ENCODE measurements at regions of chr14 and their contacts with region 1.

Region 1: GRCh38 chr14:20613094-20614037 is 22.2 kb upstream of the RNASE12 start:
- DNase-seq: peak; percentile 87 to 99
- ATAC-seq: peak; percentile 82 to 88
- H3K4me3 ChIP-seq: peak overlapping the region; percentile 50
- H3K27ac ChIP-seq: peak overlapping the region; percentile 78 to 81
- H3K4me1 ChIP-seq: peaks cover 39% of the 10 kb centered on the region
- CTCF ChIP-seq: peak; percentile 66
- EP300 ChIP-seq: no peak
- POLR2A ChIP-seq: no peak
- RAD21 ChIP-seq: 0 out of 5 replicates have a peak, but pooled peaks have one; percentile 1 to 21

Region 2: DNA sequence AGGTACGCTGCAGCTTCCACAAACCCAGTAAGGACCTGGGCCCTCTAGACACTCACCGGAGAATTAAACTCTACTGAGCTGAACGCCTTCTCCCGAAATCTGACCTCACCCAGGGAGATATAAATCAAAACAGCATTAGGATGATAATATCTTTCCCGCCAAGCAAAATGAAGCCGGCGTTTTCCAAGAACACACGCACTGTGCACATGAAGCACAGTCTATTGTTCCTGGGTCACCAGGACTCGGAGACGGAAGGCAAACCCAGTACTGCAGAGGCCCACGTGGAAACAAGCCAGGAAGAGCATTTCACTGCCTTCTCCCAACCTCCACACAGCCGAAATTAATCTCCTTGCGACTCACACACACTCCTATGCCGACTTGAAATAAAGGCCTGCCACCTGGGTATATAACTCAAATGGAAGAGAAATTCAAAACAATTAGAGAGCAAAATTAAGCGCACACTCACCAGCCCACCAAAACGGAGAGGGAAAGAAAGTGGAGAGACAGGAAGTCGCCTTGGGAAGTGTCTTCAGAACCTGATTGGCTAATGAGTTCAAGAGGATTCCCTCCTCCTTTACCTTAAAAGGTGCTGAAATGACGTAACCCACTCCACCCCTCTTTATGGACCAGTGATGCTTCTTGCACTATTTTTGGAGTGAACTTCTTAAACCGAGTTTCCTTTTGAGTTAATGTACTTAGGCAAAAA is 280.4 kb before region 1 on chr14 and contains the start of gene CCNB1IP1:
- CTCF ChIA-PET with region 1: interaction called, 67 read pairs
- POLR2A ChIA-PET with region 1: no interaction called
- DNase-seq: peak; percentile 93 to 95
- ATAC-seq: peak; percentile 99 to 100
- H3K4me3 ChIP-seq: peak within 1 kb of the TSS; percentile 84
- H3K27ac ChIP-seq: peak within 1 kb of the TSS; percentile 81 to 87
- H3K4me1 ChIP-seq: peaks cover 36% of the 10 kb centered on the region
- CTCF ChIP-seq: no peak
- EP300 ChIP-seq: no peak
- POLR2A ChIP-seq: peak; percentile 36; the same call in 1 of the 2 replicates
- RAD21 ChIP-seq: no peak
- polyA plus RNA-seq, gene CCNB1IP1: 98.2 and 121 TPM in 2 replicates

Region 3: GRCh38 chr14:20601482-20602080 is 11.8 kb before region 1 on chr14:
- CTCF ChIA-PET with region 1: interaction called, 23 read pairs
- POLR2A ChIA-PET with region 1: no interaction called
- DNase-seq: no peak
- ATAC-seq: no peak
- H3K4me3 ChIP-seq: no peak overlapping the region
- H3K27ac ChIP-seq: no peak overlapping the region
- H3K4me1 ChIP-seq: no peaks in the 10 kb centered on the region
- CTCF ChIP-seq: no peak
- EP300 ChIP-seq: no peak
- POLR2A ChIP-seq: no peak
- RAD21 ChIP-seq: no peak

Region 4: GRCh38 chr14:20632682-20633428 is 19.5 kb after region 1 on chr14:
- CTCF ChIA-PET with region 1: interaction called, 30 read pairs
- POLR2A ChIA-PET with region 1: interaction called, 10 read pairs
- DNase-seq: peak; percentile 96 to 97
- ATAC-seq: peak; percentile 85 to 88
- H3K4me3 ChIP-seq: peak overlapping the region; percentile 62
- H3K27ac ChIP-seq: peak overlapping the region; percentile 1 to 61; a peak in 3 of 6 replicates
- H3K4me1 ChIP-seq: peaks cover 21% of the 10 kb centered on the region; the same call in 2 of the 3 replicates
- CTCF ChIP-seq: no peak
- EP300 ChIP-seq: no peak
- POLR2A ChIP-seq: no peak
- RAD21 ChIP-seq: no peak

Region 5: GRCh38 chr14:20682435-20683124 is 69.2 kb after region 1 on chr14:
- CTCF ChIA-PET with region 1: interaction called, 37 read pairs
- POLR2A ChIA-PET with region 1: interaction called, 20 read pairs
- DNase-seq: peak; percentile 81 to 96
- ATAC-seq: peak; percentile 67 to 77
- H3K4me3 ChIP-seq: peak overlapping the region; percentile 58
- H3K27ac ChIP-seq: peak overlapping the region; percentile 95
- H3K4me1 ChIP-seq: peaks cover 33% of the 10 kb centered on the region
- CTCF ChIP-seq: no peak
- EP300 ChIP-seq: no peak
- POLR2A ChIP-seq: peak; percentile 80
- RAD21 ChIP-seq: no peak

Region 6: GRCh38 chr14:20697273-20698017 is 84.1 kb after region 1 on chr14:
- CTCF ChIA-PET with region 1: interaction called, 31 read pairs
- POLR2A ChIA-PET with region 1: no interaction called
- DNase-seq: peak; percentile 67 to 79
- ATAC-seq: peak; percentile 95 to 96
- H3K4me3 ChIP-seq: no peak overlapping the region
- H3K27ac ChIP-seq: no peak overlapping the region
- H3K4me1 ChIP-seq: 0 out of 3 replicates have a peak, but pooled peaks cover 3% of the 10 kb centered on the region
- CTCF ChIP-seq: peak; percentile 83
- EP300 ChIP-seq: no peak
- POLR2A ChIP-seq: no peak
- RAD21 ChIP-seq: peak; percentile 88 to 93